HCT116 (cell line): ENCODE measurements at regions of chr5 and their contacts with region 1.

Region 1: DNA sequence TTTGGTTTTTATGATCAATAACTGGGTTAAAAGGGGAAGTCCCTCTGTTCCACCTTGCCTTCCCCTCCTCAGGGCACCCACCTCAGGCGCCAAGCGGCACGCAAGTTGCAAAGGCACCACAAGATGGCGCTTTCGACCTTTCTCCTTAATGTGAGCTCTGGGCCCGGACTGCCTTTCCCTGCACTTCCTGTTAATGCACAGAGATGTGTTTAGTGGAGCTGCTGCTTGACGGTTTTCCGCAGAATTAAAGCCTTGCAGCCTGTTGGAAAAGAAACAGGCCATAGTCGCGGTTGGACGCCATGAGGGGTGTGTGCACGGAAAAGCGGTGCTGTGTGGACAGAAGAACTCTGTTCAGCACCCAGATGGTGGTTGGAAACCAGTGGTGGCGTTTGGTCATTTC is 17.9 kb downstream of the CXCL14 start:
- DNase-seq: peak; percentile 65
- ATAC-seq: peak; percentile 97
- H3K4me3 ChIP-seq: no peak overlapping the region
- H3K27ac ChIP-seq: no peak overlapping the region
- H3K4me1 ChIP-seq: peaks cover 0 to 7% of the 10 kb centered on the region in 2 experiments; a peak in 1 of 4 replicates
- H3K27me3 ChIP-seq: no peaks in the 10 kb centered on the region
- CTCF ChIP-seq: peak; percentile 84 to 90 (median 84)
- POLR2A ChIP-seq: no peak
- RAD21 ChIP-seq: peak; percentile 88

Region 2: GRCh38 chr5:135729321-135729786 is 168.5 kb after region 1 on chr5:
- CTCF ChIA-PET with region 1: interaction called, 22 read pairs
- POLR2A ChIA-PET with region 1: no interaction called
- RAD21 ChIA-PET with region 1: interaction called in 1 of 2 experiments, 5 read pairs
- intact Hi-C with region 1: loop called (anchors 2 kb)
- DNase-seq: no peak
- ATAC-seq: peak; percentile 63
- H3K4me3 ChIP-seq: no peak overlapping the region
- H3K27ac ChIP-seq: no peak overlapping the region
- H3K4me1 ChIP-seq: no peaks in the 10 kb centered on the region
- H3K27me3 ChIP-seq: no peaks in the 10 kb centered on the region
- CTCF ChIP-seq: peak; percentile 35 to 46 (median 41); a peak in 4 of 6 replicates
- POLR2A ChIP-seq: no peak
- RAD21 ChIP-seq: peak; percentile 54

Region 3: GRCh38 chr5:135829681-135830383 is 269.0 kb after region 1 on chr5:
- CTCF ChIA-PET with region 1: interaction called, 38 read pairs
- POLR2A ChIA-PET with region 1: interaction called, 4 read pairs
- RAD21 ChIA-PET with region 1: interaction called in 1 of 2 experiments, 3 read pairs
- intact Hi-C with region 1: loop called (anchors 2 kb)
- DNase-seq: peak; percentile 63
- ATAC-seq: peak; percentile 69
- H3K4me3 ChIP-seq: no peak overlapping the region
- H3K27ac ChIP-seq: no peak overlapping the region
- H3K4me1 ChIP-seq: peaks cover 0 to 13% of the 10 kb centered on the region in 2 experiments; a peak in 1 of 4 replicates
- H3K27me3 ChIP-seq: no peaks in the 10 kb centered on the region
- CTCF ChIP-seq: peak; percentile 83 to 92 (median 91)
- POLR2A ChIP-seq: no peak
- RAD21 ChIP-seq: peak; percentile 90

Region 4: DNA sequence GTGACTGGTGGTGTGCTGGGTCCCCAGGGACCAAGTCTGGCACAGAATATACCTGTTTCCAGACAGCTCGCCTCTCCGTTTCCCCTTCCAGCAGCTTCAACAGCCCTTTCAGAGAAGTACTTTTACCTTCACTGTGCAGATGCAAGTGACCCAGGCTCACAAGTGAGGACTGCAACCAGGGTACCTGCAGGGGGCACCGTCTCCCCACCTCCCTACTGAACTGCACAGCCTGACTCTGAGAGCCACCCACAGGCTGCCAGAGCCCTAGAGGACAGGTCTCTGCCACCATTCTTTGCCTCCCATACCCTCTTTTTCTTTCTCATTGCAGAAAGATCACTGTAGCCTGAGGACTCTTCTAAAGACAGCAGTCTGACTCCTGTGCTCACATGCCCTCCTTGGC is 319.4 kb after region 1 on chr5:
- CTCF ChIA-PET with region 1: interaction called, 9 read pairs
- POLR2A ChIA-PET with region 1: no interaction called
- RAD21 ChIA-PET with region 1: no interaction called
- intact Hi-C with region 1: loop called (anchors 5 kb)
- DNase-seq: peak; percentile 15
- ATAC-seq: peak; percentile 90
- H3K4me3 ChIP-seq: no peak overlapping the region
- H3K27ac ChIP-seq: no peak overlapping the region
- H3K4me1 ChIP-seq: peaks cover 16% of the 10 kb centered on the region in 2 experiments; a peak in 3 of 4 replicates
- H3K27me3 ChIP-seq: no peaks in the 10 kb centered on the region; the same call in 1 of the 2 replicates
- CTCF ChIP-seq: peak; percentile 57 to 71 (median 62); a peak in 5 of 6 replicates
- POLR2A ChIP-seq: no peak
- RAD21 ChIP-seq: peak; percentile 55